Heart right ventricle (tissue), 16 donors: ENCODE measurements at regions of chr2 and their contacts with region 1.

Region 1: DNA sequence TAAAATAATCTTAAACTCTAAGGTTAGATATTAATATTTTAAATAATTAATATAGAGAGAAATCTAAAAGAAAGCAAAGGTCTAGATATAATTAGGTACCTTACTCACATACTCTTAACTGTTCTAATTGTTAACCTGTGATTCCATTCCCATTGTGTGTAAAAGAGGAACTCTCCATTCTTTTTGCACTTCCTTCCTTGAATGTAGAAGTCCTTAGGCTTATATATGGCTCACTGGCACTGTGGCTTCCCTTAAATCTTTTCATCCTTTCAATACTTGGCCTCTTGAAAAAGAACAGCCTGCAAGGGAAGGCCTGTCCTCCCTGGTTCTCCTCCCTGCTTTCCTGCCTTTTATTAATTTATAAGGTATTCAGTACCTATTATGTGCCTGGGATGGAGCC is 182.8 kb upstream of the FOSL2 start:
- DNase-seq: no peak
- ATAC-seq: peak in 1 of 8 donors; percentile 38
- H3K4me3 ChIP-seq: no peak overlapping the region
- H3K27ac ChIP-seq: peak overlapping the region in 2 of 10 donors; percentile 8 to 23
- H3K4me1 ChIP-seq: peaks cover 0 to 16% (median 0%) of the 10 kb centered on the region in 9 donors
- H3K27me3 ChIP-seq: no peaks in the 10 kb centered on the region
- CTCF ChIP-seq: no peak

Region 2: DNA sequence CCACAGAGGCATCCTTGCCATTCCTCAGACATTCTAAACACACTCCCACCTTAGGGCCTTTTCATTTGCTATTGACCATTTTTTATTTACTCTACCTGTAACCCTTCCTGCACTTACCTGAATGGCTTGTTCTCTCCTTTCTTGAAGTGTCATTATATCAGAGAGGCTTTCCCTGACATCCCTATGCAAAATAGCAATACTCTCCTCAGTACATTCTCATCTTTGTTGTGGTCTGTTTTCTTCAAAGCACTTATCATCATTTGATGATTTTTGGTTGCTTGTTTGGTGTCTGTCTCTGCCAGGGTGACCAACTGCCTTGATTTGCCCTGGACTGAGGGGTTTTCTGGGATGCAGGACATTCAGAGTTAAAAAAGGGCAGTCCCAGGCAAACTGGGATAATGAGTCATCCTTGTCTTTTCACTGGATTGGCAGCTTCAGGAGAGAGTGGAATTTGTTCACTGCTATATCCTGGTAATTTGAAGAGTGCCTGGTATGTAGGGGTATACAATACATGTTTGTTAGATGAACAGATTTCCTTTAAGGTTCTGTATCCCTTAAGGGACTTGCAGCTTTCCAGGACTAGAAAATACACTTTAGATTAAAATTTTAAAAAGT is 217.0 kb before region 1 on chr2:
- intact Hi-C with region 1: no loop called
- DNase-seq: no peak
- ATAC-seq: peak in 5 of 8 donors; percentile 34 to 74 (median 55)
- H3K4me3 ChIP-seq: no peak overlapping the region
- H3K27ac ChIP-seq: no peak overlapping the region
- H3K4me1 ChIP-seq: peaks cover 0 to 51% (median 16%) of the 10 kb centered on the region in 9 donors
- H3K27me3 ChIP-seq: no peaks in the 10 kb centered on the region
- CTCF ChIP-seq: no peak

Region 3: DNA sequence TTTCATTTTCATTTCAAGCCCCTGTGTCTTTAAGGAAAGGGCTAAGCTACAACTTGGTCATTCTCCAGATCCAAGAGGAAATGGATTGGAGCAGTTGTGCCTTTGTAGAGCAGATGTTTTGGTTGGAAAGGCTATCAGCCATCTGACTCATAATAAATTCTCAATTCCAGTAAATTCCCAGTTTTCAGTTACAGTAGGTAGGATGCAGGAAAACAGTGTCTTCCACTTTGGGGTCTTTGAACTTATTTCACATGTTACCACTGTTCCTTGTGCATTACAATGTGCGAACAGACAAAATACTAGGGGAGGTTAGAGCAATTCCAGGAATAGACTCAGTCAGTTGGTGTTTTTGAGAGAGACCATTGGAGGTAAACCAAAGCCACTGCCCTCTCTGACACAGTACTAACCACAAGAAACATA is 107.4 kb before region 1 on chr2:
- intact Hi-C with region 1: no loop called
- DNase-seq: peak in 1 of 2 donors; percentile 29
- ATAC-seq: peak; percentile 82 to 91 (median 87)
- H3K4me3 ChIP-seq: peak overlapping the region in 5 of 10 donors; percentile 15 to 34 (median 29)
- H3K27ac ChIP-seq: peak overlapping the region; percentile 36 to 87 (median 74)
- H3K4me1 ChIP-seq: peaks cover 5 to 42% (median 30%) of the 10 kb centered on the region in 9 donors
- H3K27me3 ChIP-seq: no peaks in the 10 kb centered on the region
- CTCF ChIP-seq: no peak

Region 4: DNA sequence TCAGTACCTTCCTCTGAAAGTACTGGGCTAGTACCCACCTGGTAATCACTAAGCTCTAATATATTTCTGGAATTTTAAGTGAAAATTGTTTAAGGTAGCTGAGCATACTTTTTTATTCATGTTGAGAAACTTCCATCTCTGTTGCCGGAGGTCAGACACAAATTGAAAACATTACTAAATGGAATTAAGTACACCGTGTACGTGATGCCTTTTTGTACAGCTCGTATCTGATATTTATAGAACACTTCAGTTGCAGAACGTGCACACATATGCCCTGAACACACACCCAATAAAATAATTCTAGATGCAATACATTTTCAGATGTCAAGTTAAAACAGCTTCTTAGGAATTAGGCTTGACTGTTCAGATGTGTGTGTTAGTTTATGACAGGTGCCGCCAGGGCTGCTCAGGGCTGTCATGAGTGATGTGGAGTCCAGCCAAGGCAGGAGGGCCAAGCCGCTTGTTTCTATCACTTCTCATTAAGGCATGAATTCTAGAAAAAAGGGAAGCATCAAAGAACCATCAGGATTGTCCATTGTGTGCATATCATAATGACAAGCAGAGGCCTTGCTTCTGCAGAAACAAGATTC is 101.9 kb after region 1 on chr2:
- intact Hi-C with region 1: loop called in 1 of 10 experiments (anchors 5 kb)
- DNase-seq: no peak
- ATAC-seq: peak in 6 of 8 donors; percentile 44 to 89 (median 68)
- H3K4me3 ChIP-seq: no peak overlapping the region
- H3K27ac ChIP-seq: peak overlapping the region in 7 of 10 donors; percentile 2 to 72 (median 9)
- H3K4me1 ChIP-seq: peaks cover 2 to 25% (median 9%) of the 10 kb centered on the region in 9 donors
- H3K27me3 ChIP-seq: no peaks in the 10 kb centered on the region
- CTCF ChIP-seq: no peak